B cell (primary cell): ENCODE measurements at regions of chr1 and their contacts with region 1.

Region 1: GRCh38 chr1:222465211-222466041 is 82.5 kb downstream of the HHIPL2 start:
- DNase-seq: peak; percentile 92
- ATAC-seq: peak; percentile 95
- H3K4me3 ChIP-seq: peak overlapping the region; percentile 36 to 82 (median 72)
- H3K4me3 Mint-ChIP-seq: peak overlapping the region; percentile 92
- H3K27ac ChIP-seq: peak overlapping the region; percentile 77 to 84
- H3K27ac Mint-ChIP-seq: peak overlapping the region; percentile 96
- H3K4me1 ChIP-seq: peaks cover 3 to 15% of the 10 kb centered on the region in 2 donors
- H3K4me1 Mint-ChIP-seq: peaks cover 13% of the 10 kb centered on the region
- H3K27me3 ChIP-seq: peaks cover 0 to under 1% (median 0%) of the 10 kb centered on the region in 4 experiments
- H3K27me3 Mint-ChIP-seq: peaks cover 13% of the 10 kb centered on the region
- CTCF ChIP-seq: peak; percentile 100

Region 2: DNA sequence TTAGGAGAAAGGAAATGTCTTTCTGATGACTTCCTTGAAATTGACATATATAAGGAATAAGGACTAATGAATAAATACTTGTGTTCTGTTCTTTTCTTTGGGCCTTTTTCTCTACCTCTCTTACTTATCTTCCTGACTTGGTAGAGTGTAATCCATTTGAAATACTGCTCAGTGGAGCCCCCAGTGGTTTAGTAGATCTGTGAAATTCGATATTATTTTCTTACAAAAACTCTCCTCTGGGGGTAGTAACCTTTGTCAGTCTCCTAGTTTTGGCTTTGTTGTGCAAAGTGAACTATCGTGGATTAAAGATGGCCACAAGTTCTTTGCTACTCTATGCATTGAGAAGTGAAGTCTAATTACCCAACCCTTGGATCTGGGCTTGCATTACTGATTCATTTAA is 772.3 kb before region 1 on chr1:
- CTCF ChIA-PET with region 1: no interaction called
- POLR2A ChIA-PET with region 1: no interaction called
- intact Hi-C with region 1: no loop called
- DNase-seq: no peak
- ATAC-seq: no peak
- H3K4me3 ChIP-seq: no peak overlapping the region
- H3K4me3 Mint-ChIP-seq: no peak overlapping the region
- H3K27ac ChIP-seq: no peak overlapping the region
- H3K27ac Mint-ChIP-seq: no peak overlapping the region
- H3K4me1 ChIP-seq: no peaks in the 10 kb centered on the region
- H3K4me1 Mint-ChIP-seq: peaks cover 7% of the 10 kb centered on the region
- H3K27me3 ChIP-seq: no peaks in the 10 kb centered on the region
- H3K27me3 Mint-ChIP-seq: no peaks in the 10 kb centered on the region
- CTCF ChIP-seq: peak; percentile 21

Region 3: DNA sequence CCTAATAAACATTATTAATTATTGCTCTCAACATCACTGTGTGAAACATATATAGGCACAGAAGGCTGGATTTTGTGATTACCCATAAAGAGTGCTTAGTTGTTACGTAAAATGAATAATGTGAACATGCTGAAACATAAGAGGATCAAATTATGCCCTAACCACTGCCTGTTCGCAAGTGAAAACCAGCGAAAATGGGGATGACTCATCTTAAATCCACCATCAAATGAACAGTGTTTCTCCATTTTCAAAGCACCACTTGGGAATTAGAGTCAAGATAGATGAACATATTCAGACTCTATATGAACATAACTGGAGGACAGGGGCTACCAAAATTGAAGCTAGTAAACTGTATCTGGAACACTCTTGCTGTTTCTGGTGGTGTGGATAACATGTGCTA is 303.8 kb before region 1 on chr1:
- CTCF ChIA-PET with region 1: no interaction called
- POLR2A ChIA-PET with region 1: no interaction called
- intact Hi-C with region 1: no loop called
- DNase-seq: no peak
- ATAC-seq: no peak
- H3K4me3 ChIP-seq: no peak overlapping the region
- H3K4me3 Mint-ChIP-seq: no peak overlapping the region
- H3K27ac ChIP-seq: no peak overlapping the region
- H3K27ac Mint-ChIP-seq: no peak overlapping the region
- H3K4me1 ChIP-seq: no peaks in the 10 kb centered on the region
- H3K4me1 Mint-ChIP-seq: no peaks in the 10 kb centered on the region
- H3K27me3 ChIP-seq: no peaks in the 10 kb centered on the region
- H3K27me3 Mint-ChIP-seq: no peaks in the 10 kb centered on the region
- CTCF ChIP-seq: no peak

Region 4: DNA sequence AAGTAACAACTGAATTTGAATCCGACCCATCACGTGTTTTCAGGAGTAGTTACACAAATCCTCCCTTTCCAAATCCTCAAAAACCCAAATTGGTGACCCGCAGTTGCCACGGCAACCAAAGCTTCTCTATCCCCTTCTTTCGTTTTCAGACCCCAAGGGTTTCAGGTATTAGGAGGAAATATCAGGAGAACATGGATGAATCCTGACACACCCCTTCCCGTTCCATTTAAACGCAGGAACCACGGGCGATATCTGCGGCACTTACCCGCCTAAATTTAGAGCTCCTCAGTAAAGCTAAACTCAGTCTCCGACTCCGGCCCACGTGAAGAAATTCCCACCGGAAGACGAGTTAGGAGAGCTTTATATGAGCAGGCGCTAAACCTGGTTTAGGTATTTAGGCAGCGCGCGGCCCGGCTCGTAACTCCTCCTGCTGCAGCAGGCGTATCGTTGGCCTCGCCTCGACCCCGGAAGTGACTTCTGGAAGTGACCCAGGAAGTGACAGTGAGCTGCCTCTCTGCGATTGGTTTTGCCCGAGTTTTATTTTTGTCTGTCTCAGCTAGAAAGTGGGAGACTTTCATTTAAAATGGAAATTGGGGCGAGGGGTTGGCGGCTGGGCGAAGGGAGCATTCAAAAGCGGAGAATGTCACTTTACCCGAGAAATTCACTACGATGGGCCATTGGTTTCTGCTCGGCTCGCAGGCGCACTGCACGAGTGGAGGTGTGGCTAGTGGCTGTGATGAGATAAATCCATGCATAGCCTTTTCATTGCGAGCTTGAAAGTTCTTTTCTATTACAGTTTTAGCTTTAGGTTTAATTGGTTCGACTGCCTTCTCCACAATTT is 124.3 kb after region 1 on chr1 and contains the start of gene TAF1A:
- CTCF ChIA-PET with region 1: interaction called, 5 read pairs
- POLR2A ChIA-PET with region 1: no interaction called
- intact Hi-C with region 1: loop called (anchors 2 kb)
- DNase-seq: peak; percentile 87
- ATAC-seq: peak; percentile 99
- H3K4me3 ChIP-seq: peak within 1 kb of the TSS; percentile 68 to 95 (median 93)
- H3K4me3 Mint-ChIP-seq: peak within 1 kb of the TSS; percentile 98
- H3K27ac ChIP-seq: peak within 1 kb of the TSS; percentile 66 to 92
- H3K27ac Mint-ChIP-seq: peak within 1 kb of the TSS; percentile 98
- H3K4me1 ChIP-seq: peaks cover 28 to 37% of the 10 kb centered on the region in 2 donors
- H3K4me1 Mint-ChIP-seq: peaks cover 54% of the 10 kb centered on the region
- H3K27me3 ChIP-seq: no peaks in the 10 kb centered on the region
- H3K27me3 Mint-ChIP-seq: no peaks in the 10 kb centered on the region
- CTCF ChIP-seq: no peak
- total RNA-seq, gene TAF1A: 23.7 and 25.9 TPM in 2 replicates

Region 5: GRCh38 chr1:222617367-222617951 is 152.0 kb after region 1 on chr1:
- CTCF ChIA-PET with region 1: interaction called, 10 read pairs
- POLR2A ChIA-PET with region 1: no interaction called
- intact Hi-C with region 1: loop called (anchors 1 kb)
- DNase-seq: peak; percentile 95
- ATAC-seq: peak; percentile 90
- H3K4me3 ChIP-seq: peak overlapping the region; percentile 6 to 91 (median 67)
- H3K4me3 Mint-ChIP-seq: peak overlapping the region; percentile 96
- H3K27ac ChIP-seq: peak overlapping the region; percentile 71 to 82
- H3K27ac Mint-ChIP-seq: peak overlapping the region; percentile 95
- H3K4me1 ChIP-seq: peaks cover 17 to 18% of the 10 kb centered on the region in 2 donors
- H3K4me1 Mint-ChIP-seq: peaks cover 29% of the 10 kb centered on the region
- H3K27me3 ChIP-seq: peaks cover 0 to 15% (median 6%) of the 10 kb centered on the region in 4 experiments
- H3K27me3 Mint-ChIP-seq: peaks cover 19% of the 10 kb centered on the region
- CTCF ChIP-seq: no peak

Region 6: DNA sequence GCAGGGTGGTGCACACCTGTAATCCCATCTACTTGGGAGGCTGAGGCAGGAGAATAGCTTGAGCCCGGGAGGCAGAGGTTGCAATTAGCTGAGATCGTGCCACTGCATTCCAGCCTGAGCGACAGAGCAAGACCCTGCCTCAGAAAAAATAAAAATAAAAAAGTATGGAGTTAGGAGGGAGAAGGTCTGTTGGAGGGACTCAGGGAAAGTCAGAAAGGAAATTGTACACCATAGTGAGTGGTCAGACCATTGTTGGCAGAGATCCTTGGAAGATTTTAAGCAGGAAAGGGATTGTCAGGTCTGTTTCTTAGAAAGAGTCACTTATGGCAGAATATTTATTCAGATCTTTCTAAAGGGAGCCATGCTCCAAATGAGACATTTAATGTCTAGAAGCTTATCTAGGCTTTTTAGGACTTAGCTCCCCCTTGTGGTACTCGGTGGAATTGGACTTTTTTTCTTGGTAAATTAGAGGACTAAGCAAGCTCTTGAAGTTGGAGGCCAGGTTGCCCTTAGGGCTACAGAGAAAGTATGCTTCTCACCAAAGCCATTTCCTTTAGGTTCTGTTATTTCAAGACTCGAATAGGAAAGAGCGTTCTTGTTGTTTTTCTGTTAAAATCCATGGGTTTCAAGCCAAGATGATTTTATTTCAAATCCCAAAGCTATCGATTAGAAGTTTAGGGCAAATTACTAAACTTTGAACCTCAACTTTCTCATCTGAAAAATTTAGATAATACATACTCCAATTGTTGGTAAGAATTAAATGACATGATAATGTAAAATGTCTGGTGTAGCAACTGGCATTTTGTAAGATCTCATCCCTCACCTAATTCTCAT is 169.0 kb after region 1 on chr1:
- CTCF ChIA-PET with region 1: interaction called, 87 read pairs
- POLR2A ChIA-PET with region 1: interaction called, 3 read pairs
- intact Hi-C with region 1: loop called (anchors 1 kb)
- DNase-seq: peak; percentile 89
- ATAC-seq: peak; percentile 86
- H3K4me3 ChIP-seq: no peak overlapping the region
- H3K4me3 Mint-ChIP-seq: no peak overlapping the region
- H3K27ac ChIP-seq: peak overlapping the region in 1 of 2 donors; percentile 42
- H3K27ac Mint-ChIP-seq: peak overlapping the region; percentile 61
- H3K4me1 ChIP-seq: peaks cover 12 to 15% of the 10 kb centered on the region in 2 donors
- H3K4me1 Mint-ChIP-seq: peaks cover 11% of the 10 kb centered on the region
- H3K27me3 ChIP-seq: no peaks in the 10 kb centered on the region
- H3K27me3 Mint-ChIP-seq: no peaks in the 10 kb centered on the region
- CTCF ChIP-seq: peak; percentile 93

Region 7: GRCh38 chr1:222643938-222644635 is 178.7 kb after region 1 on chr1:
- CTCF ChIA-PET with region 1: interaction called, 4 read pairs
- POLR2A ChIA-PET with region 1: interaction called, 4 read pairs
- intact Hi-C with region 1: loop called (anchors 1 kb)
- DNase-seq: peak; percentile 98
- ATAC-seq: peak; percentile 96
- H3K4me3 ChIP-seq: peak overlapping the region; percentile 71 to 98 (median 95)
- H3K4me3 Mint-ChIP-seq: peak overlapping the region; percentile 86
- H3K27ac ChIP-seq: peak overlapping the region; percentile 97
- H3K27ac Mint-ChIP-seq: peak overlapping the region; percentile 91
- H3K4me1 ChIP-seq: peaks cover 13 to 15% of the 10 kb centered on the region in 2 donors
- H3K4me1 Mint-ChIP-seq: peaks cover 30% of the 10 kb centered on the region
- H3K27me3 ChIP-seq: no peaks in the 10 kb centered on the region
- H3K27me3 Mint-ChIP-seq: no peaks in the 10 kb centered on the region
- CTCF ChIP-seq: no peak

Region 8: GRCh38 chr1:222814536-222815439 is 349.4 kb after region 1 on chr1 and contains the start of gene DISP1:
- CTCF ChIA-PET with region 1: no interaction called
- POLR2A ChIA-PET with region 1: no interaction called
- intact Hi-C with region 1: loop called (anchors 1 kb)
- DNase-seq: peak; percentile 80
- ATAC-seq: peak; percentile 86
- H3K4me3 ChIP-seq: peak within 1 kb of the TSS; percentile 84 to 99 (median 94)
- H3K4me3 Mint-ChIP-seq: peak within 1 kb of the TSS; percentile 94
- H3K27ac ChIP-seq: peak within 1 kb of the TSS; percentile 81 to 90
- H3K27ac Mint-ChIP-seq: peak within 1 kb of the TSS; percentile 95
- H3K4me1 ChIP-seq: peaks cover 17 to 23% of the 10 kb centered on the region in 2 donors
- H3K4me1 Mint-ChIP-seq: peaks cover 39% of the 10 kb centered on the region
- H3K27me3 ChIP-seq: no peaks in the 10 kb centered on the region
- H3K27me3 Mint-ChIP-seq: no peaks in the 10 kb centered on the region
- CTCF ChIP-seq: no peak
- total RNA-seq, gene DISP1: 12.0 and 12.6 TPM in 2 replicates